ENCODE measurements at regions of chr13 and their contacts with region 1.

Region 1: DNA sequence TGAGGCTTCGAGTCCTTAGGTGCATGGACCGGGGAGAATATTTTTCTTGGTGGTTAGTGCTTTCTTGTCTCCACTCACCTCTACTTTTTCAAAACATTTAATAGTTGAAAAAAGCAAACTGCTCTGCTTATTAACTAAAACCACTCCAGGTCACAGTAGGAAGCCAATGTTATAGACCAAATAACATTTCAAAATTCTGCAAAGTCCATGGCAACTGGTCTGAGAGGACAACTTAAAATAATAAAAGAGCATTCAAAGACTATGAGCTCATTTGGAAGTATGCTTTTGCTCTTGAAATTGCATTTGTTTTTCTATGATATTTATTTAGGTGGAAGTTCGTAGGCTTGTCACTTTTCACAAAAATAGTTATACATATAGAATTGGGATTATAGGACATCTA is 483.0 kb downstream of the DCT start:
- DNase-seq: no peak
- ATAC-seq: no peak
- H3K4me3 ChIP-seq: no peak overlapping the region
- H3K4me3 Mint-ChIP-seq: no peak overlapping the region
- H3K27ac ChIP-seq: no peak overlapping the region
- H3K27ac Mint-ChIP-seq: no peak overlapping the region
- H3K4me1 ChIP-seq: no peaks in the 10 kb centered on the region
- H3K4me1 Mint-ChIP-seq: no peaks in the 10 kb centered on the region
- H3K27me3 ChIP-seq: no peaks in the 10 kb centered on the region
- H3K27me3 Mint-ChIP-seq: peaks cover 5% of the 10 kb centered on the region
- CTCF ChIP-seq: no peak

Region 2: GRCh38 chr13:93915269-93915809 is 81.1 kb before region 1 on chr13:
- CTCF ChIA-PET with region 1: no interaction called
- POLR2A ChIA-PET with region 1: no interaction called
- intact Hi-C with region 1: no loop called
- DNase-seq: no peak
- ATAC-seq: no peak
- H3K4me3 ChIP-seq: no peak overlapping the region
- H3K4me3 Mint-ChIP-seq: no peak overlapping the region
- H3K27ac ChIP-seq: no peak overlapping the region
- H3K27ac Mint-ChIP-seq: no peak overlapping the region
- H3K4me1 ChIP-seq: no peaks in the 10 kb centered on the region
- H3K4me1 Mint-ChIP-seq: no peaks in the 10 kb centered on the region
- H3K27me3 ChIP-seq: no peaks in the 10 kb centered on the region
- H3K27me3 Mint-ChIP-seq: peaks cover 2% of the 10 kb centered on the region
- CTCF ChIP-seq: no peak

Region 3: DNA sequence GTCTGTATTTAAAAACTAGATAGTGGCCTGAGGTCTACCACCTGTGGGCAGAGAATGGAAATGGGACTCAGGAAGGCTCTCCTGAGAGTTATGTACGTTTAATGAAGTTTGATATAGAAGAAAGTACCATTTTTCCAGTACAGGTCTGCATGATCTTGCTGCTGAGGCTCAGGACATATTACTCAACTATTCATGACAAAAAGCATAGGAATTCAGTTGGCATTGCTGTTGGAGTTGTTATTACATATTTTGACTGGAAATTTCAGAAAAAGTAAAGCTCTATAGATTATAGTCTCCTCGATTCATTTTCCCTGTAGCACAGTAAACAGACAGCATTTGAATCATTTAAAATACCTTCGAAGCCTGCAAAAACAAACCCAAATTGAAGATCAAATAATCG is 13.2 kb after region 1 on chr13:
- CTCF ChIA-PET with region 1: no interaction called
- POLR2A ChIA-PET with region 1: no interaction called
- intact Hi-C with region 1: loop called in 1 of 2 experiments (anchors 1 kb)
- DNase-seq: no peak
- ATAC-seq: no peak
- H3K4me3 ChIP-seq: no peak overlapping the region
- H3K4me3 Mint-ChIP-seq: no peak overlapping the region
- H3K27ac ChIP-seq: no peak overlapping the region
- H3K27ac Mint-ChIP-seq: no peak overlapping the region
- H3K4me1 ChIP-seq: no peaks in the 10 kb centered on the region
- H3K4me1 Mint-ChIP-seq: no peaks in the 10 kb centered on the region
- H3K27me3 ChIP-seq: no peaks in the 10 kb centered on the region
- H3K27me3 Mint-ChIP-seq: no peaks in the 10 kb centered on the region
- CTCF ChIP-seq: no peak